ENCODE measurements at regions of chrX and their contacts with region 1.

Region 1: GRCh38 chrX:74636749-74637314 is 22.4 kb upstream of the RLIM start:
- DNase-seq: no peak

Region 2: GRCh38 chrX:74666286-74666685 is 29.5 kb after region 1 on chrX:
- intact Hi-C with region 1: no loop called
- DNase-seq: no peak

Region 3: DNA sequence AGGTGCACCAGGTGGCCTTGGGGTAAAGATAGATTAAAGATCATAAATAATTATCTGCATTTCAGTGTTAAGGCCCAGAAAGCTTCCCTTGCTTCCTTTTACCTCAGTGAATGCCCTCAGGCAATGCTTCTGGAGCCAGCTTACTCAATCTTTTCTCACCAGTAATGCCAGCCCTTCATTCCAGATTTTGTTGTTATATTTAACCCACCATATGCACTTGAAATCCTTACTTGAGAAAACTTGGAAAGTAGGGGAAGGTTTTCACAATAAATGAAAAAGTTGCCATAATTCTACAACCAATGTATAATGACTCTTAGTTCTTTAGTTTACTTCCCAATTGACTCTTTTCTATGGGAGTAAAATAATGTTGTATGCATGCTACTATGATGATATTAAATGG is 1519.0 kb after region 1 on chrX:
- intact Hi-C with region 1: loop called in 1 of 2 experiments (anchors 5 kb)
- DNase-seq: no peak